Heart left ventricle (tissue), 16 donors: ENCODE measurements at regions of chr7 and their contacts with region 1.

Region 1: GRCh38 chr7:131556052-131556908 is at the start of gene PODXL:
- DNase-seq: peak; percentile 78 to 91 (median 82)
- ATAC-seq: peak; percentile 56 to 84 (median 79)
- H3K4me3 ChIP-seq: peak within 1 kb of the TSS; percentile 46 to 94 (median 88)
- H3K27ac ChIP-seq: peak within 1 kb of the TSS; percentile 75 to 96 (median 93)
- H3K4me1 ChIP-seq: peaks cover 0 to 43% (median 28%) of the 10 kb centered on the region in 12 donors
- H3K27me3 ChIP-seq: peaks cover 0 to 25% (median 0%) of the 10 kb centered on the region in 9 donors
- CTCF ChIP-seq: peak in 2 of 12 donors; percentile 23 to 24
- POLR2A ChIP-seq: peak in 1 of 2 donors; percentile 71
- total RNA-seq, gene PODXL: 57.7 to 230 (median 75.1) TPM

Region 2: DNA sequence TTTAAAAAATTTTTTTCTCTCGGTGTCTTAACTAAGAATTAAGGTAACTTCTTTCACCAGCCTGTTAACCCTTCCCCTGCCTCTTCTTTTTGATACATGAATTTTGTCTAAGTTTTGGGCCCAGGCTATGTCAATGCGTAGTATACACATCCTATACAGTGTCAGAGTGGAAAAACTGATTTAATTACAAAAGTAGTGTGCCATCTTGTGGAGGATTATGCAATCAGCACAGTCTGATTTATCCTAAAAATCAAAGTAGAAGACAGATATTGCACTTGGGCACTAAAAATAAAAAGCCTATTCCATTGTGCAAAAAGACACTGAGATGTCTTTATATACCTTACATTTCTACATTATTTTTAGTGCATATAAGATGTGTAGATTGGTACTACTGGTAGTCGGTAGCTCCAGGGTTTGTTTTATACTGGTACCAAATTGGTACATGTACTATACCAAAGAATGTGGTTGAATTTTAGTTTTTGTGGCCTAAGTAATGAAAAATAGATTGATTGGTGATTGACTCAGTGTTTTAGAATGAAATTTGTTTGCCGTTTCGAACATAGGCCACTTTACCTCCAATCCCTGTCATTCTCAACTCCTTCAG is 132.0 kb before region 1 on chr7:
- intact Hi-C with region 1: no loop called
- DNase-seq: no peak
- ATAC-seq: peak; percentile 41 to 64 (median 58)
- H3K4me3 ChIP-seq: no peak overlapping the region
- H3K27ac ChIP-seq: peak overlapping the region in 1 of 12 donors; percentile 15
- H3K4me1 ChIP-seq: peaks cover 0 to 27% (median 15%) of the 10 kb centered on the region in 12 donors
- H3K27me3 ChIP-seq: no peaks in the 10 kb centered on the region
- CTCF ChIP-seq: peak; percentile 32 to 73 (median 63)
- POLR2A ChIP-seq: no peak

Region 3: GRCh38 chr7:131507592-131508331 is 48.5 kb before region 1 on chr7:
- intact Hi-C with region 1: loop called in 3 of 10 experiments (anchors 5 to 10 kb)
- DNase-seq: peak; percentile 82 to 92 (median 84)
- ATAC-seq: peak; percentile 54 to 72 (median 66)
- H3K4me3 ChIP-seq: peak overlapping the region in 3 of 12 donors; percentile 10 to 19 (median 10)
- H3K27ac ChIP-seq: peak overlapping the region in 6 of 12 donors; percentile 21 to 59 (median 27)
- H3K4me1 ChIP-seq: peaks cover 10 to 63% (median 45%) of the 10 kb centered on the region in 12 donors
- H3K27me3 ChIP-seq: no peaks in the 10 kb centered on the region
- CTCF ChIP-seq: peak; percentile 90 to 98 (median 94)
- POLR2A ChIP-seq: no peak

Region 4: DNA sequence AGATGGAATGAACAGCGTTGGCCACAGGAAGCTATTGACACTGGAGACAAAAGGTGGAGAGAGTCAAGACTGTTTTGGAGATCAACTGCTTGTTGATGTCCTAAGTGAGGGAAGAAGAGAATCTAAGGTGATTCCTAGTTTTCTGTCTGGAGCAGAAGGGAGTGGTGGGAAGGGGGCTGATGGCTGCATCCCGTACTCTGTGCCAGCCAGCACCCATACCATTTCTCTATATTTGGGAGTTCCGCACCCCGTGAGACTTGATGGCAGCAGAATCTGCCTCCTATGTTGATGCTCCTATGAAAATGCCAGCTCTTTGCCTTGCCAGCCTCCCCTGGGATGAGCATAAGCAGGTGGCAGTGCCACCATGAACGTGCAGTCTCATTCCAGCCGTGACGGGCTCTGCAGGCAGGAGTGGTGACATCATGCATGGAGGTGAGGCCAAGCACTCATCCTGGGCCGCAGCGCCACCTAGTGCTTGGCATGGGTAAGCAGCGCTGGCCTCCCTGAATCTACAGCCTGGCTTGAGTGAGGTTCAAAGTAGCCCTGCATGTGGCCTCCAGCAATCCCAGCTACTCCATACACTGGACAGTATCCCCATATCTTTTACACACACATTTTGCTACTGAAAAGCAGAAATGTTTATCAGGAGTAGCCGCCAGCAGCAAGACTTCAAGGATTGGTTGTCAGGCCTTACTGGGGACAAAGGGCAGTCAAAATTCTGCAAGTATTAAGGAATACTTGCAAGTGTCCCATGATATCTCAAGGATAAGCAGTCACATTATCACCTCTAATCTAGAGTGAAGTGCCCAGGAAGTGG is 42.8 kb before region 1 on chr7:
- intact Hi-C with region 1: loop called in 3 of 10 experiments (anchors 5 to 10 kb)
- DNase-seq: peak; percentile 85 to 91 (median 88)
- ATAC-seq: peak; percentile 83 to 93 (median 90)
- H3K4me3 ChIP-seq: no peak overlapping the region
- H3K27ac ChIP-seq: peak overlapping the region; percentile 7 to 77 (median 45)
- H3K4me1 ChIP-seq: peaks cover 0 to 59% (median 37%) of the 10 kb centered on the region in 12 donors
- H3K27me3 ChIP-seq: no peaks in the 10 kb centered on the region
- CTCF ChIP-seq: peak; percentile 92 to 99 (median 95)
- POLR2A ChIP-seq: no peak

Region 5: DNA sequence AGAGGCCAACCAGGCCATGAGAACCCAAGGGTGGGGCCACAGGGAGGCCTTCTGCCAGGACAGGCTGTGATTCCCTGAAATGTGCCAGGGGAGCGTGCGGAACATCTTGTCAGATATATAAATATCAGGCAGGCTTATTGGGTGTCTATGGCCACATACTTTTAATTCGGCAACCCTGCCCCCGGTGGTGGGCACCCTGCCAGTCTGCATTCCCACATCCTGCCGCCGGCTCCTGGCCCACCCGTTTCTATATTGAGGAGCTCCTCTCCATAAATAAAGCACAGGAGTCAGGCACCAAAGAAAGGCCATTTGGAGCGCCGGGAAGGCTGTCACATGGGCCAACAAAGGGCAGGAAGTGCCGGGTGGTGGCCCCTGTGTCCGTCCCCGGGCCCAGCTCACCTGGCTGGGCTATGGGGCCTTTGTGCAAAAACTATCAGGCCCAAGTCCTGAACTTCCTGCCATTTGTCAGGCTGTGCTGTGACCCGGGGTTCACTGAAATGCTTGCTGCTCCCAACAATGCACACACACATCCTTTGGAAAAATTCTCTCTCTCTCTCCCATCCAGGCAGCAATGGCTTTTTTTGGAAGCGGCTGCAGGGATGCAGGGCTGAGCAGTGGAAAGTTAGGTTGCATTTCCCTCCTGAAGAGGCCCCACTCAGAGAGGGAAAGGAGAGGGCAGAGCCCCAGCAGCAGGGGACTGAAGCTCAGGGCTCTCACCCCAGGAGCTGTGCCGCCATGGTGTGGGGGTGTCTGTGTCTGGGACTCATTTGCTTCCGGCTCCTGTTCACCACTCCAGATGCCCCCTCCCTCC is 25.2 kb after region 1 on chr7:
- intact Hi-C with region 1: loop called in 2 of 10 experiments (anchors 1 to 2 kb)
- DNase-seq: peak; percentile 86 to 93 (median 87)
- ATAC-seq: peak; percentile 88 to 94 (median 92)
- H3K4me3 ChIP-seq: no peak overlapping the region
- H3K27ac ChIP-seq: peak overlapping the region; percentile 76 to 95 (median 83)
- H3K4me1 ChIP-seq: peaks cover 0 to 37% (median 25%) of the 10 kb centered on the region in 12 donors
- H3K27me3 ChIP-seq: no peaks in the 10 kb centered on the region
- CTCF ChIP-seq: peak in 9 of 12 donors; percentile 10 to 43 (median 18)
- POLR2A ChIP-seq: no peak

Region 6: DNA sequence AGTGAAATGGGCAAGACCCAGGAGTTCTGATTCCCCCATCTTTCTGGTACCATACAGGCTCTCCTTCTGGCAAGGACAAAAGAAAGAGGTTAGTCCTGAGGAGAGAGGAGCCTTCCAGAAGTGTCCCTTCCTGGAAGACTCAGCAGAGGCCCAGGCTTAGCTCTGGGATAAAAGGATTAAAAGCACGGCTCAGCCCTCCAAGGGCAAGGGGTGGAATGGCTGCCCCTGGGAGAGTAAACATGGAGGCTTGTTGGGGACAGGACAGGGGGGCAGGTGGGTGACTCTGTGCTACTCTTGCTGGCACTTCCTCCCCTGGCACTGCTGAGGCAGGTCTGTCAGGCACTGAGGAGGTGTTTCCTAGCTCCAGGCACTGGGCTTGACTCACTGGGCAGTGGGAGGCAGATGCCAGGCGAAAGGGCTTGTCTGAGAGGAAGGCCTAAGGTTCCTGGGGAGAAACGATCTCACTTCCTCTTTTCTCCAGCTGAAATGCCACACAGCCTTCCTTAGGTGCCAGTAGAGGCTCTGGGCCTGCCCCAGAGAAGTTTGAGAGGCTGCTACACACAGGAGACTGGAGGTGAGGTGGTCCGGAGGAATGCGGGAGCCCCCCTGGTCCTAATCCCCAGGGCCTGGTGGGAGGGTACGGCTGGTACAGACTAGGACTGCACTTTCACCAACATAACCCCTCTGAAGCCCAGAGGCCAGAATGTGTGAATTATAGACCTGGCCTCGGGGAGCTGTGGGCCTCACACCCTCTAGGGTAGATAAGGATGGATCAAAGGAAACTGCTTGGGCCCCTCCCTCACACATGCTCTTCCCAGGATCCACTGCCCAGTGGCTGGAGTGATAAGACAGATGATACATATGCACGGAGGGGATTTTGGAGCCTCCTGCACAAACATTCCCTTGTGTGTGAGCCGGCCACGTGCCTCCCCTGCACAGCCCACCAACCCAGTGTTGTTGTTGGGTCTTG is 63.3 kb after region 1 on chr7:
- intact Hi-C with region 1: loop called in 1 of 10 experiments (anchors 5 kb)
- DNase-seq: no peak
- ATAC-seq: peak in 1 of 4 donors; percentile 4
- H3K4me3 ChIP-seq: no peak overlapping the region
- H3K27ac ChIP-seq: peak overlapping the region in 6 of 12 donors; percentile 1 to 78 (median 52)
- H3K4me1 ChIP-seq: peaks cover 8 to 56% (median 45%) of the 10 kb centered on the region in 12 donors
- H3K27me3 ChIP-seq: no peaks in the 10 kb centered on the region
- CTCF ChIP-seq: no peak
- POLR2A ChIP-seq: no peak

Region 7: GRCh38 chr7:131633342-131633843 is 77.1 kb after region 1 on chr7:
- intact Hi-C with region 1: loop called in 3 of 10 experiments (anchors 2 to 5 kb)
- DNase-seq: peak in 1 of 5 donors; percentile 54
- ATAC-seq: peak in 3 of 4 donors; percentile 32 to 46 (median 40)
- H3K4me3 ChIP-seq: no peak overlapping the region
- H3K27ac ChIP-seq: peak overlapping the region in 9 of 12 donors; percentile 25 to 79 (median 60)
- H3K4me1 ChIP-seq: peaks cover 6 to 62% (median 35%) of the 10 kb centered on the region in 12 donors
- H3K27me3 ChIP-seq: no peaks in the 10 kb centered on the region
- CTCF ChIP-seq: no peak
- POLR2A ChIP-seq: no peak

Region 8: GRCh38 chr7:131654668-131655326 is 98.5 kb after region 1 on chr7:
- intact Hi-C with region 1: loop called in 4 of 10 experiments (anchors 1 to 5 kb)
- DNase-seq: peak; percentile 85 to 92 (median 89)
- ATAC-seq: peak; percentile 82 to 89 (median 86)
- H3K4me3 ChIP-seq: no peak overlapping the region
- H3K27ac ChIP-seq: no peak overlapping the region
- H3K4me1 ChIP-seq: peaks cover 0 to 23% (median 8%) of the 10 kb centered on the region in 12 donors
- H3K27me3 ChIP-seq: no peaks in the 10 kb centered on the region
- CTCF ChIP-seq: peak; percentile 84 to 94 (median 88)
- POLR2A ChIP-seq: no peak